ENCODE measurements at regions of chr11 and their contacts with region 1.

Region 1: GRCh38 chr11:32658639-32659406 is 75.2 kb downstream of the EIF3M start:
- DNase-seq: no peak
- H3K4me3 ChIP-seq: no peak overlapping the region
- H3K27ac ChIP-seq: peak overlapping the region; percentile 33
- H3K4me1 ChIP-seq: peaks cover 15% of the 10 kb centered on the region
- H3K27me3 ChIP-seq: no peaks in the 10 kb centered on the region
- CTCF ChIP-seq: no peak

Region 2: GRCh38 chr11:32290783-32291182 is 368.0 kb before region 1 on chr11:
- CTCF ChIA-PET with region 1: interaction called, 17 read pairs
- POLR2A ChIA-PET with region 1: no interaction called
- intact Hi-C with region 1: no loop called
- DNase-seq: no peak
- H3K4me3 ChIP-seq: no peak overlapping the region
- H3K27ac ChIP-seq: no peak overlapping the region
- H3K4me1 ChIP-seq: no peaks in the 10 kb centered on the region
- H3K27me3 ChIP-seq: peaks cover 16% of the 10 kb centered on the region
- CTCF ChIP-seq: no peak

Region 3: GRCh38 chr11:32643526-32643925 is 15.3 kb before region 1 on chr11:
- CTCF ChIA-PET with region 1: interaction called, 11 read pairs
- POLR2A ChIA-PET with region 1: no interaction called
- intact Hi-C with region 1: no loop called
- DNase-seq: no peak
- H3K4me3 ChIP-seq: no peak overlapping the region
- H3K27ac ChIP-seq: peak overlapping the region; percentile 2; the same call in 1 of the 2 replicates
- H3K4me1 ChIP-seq: no peaks in the 10 kb centered on the region
- H3K27me3 ChIP-seq: no peaks in the 10 kb centered on the region
- CTCF ChIP-seq: no peak

Region 4: GRCh38 chr11:32968541-32968940 is 309.7 kb after region 1 on chr11:
- CTCF ChIA-PET with region 1: no interaction called
- POLR2A ChIA-PET with region 1: no interaction called
- intact Hi-C with region 1: no loop called
- DNase-seq: no peak
- H3K4me3 ChIP-seq: no peak overlapping the region
- H3K27ac ChIP-seq: no peak overlapping the region
- H3K4me1 ChIP-seq: no peaks in the 10 kb centered on the region
- H3K27me3 ChIP-seq: no peaks in the 10 kb centered on the region
- CTCF ChIP-seq: no peak